ENCODE measurements at regions of chr9 and their contacts with region 1.

Region 1: DNA sequence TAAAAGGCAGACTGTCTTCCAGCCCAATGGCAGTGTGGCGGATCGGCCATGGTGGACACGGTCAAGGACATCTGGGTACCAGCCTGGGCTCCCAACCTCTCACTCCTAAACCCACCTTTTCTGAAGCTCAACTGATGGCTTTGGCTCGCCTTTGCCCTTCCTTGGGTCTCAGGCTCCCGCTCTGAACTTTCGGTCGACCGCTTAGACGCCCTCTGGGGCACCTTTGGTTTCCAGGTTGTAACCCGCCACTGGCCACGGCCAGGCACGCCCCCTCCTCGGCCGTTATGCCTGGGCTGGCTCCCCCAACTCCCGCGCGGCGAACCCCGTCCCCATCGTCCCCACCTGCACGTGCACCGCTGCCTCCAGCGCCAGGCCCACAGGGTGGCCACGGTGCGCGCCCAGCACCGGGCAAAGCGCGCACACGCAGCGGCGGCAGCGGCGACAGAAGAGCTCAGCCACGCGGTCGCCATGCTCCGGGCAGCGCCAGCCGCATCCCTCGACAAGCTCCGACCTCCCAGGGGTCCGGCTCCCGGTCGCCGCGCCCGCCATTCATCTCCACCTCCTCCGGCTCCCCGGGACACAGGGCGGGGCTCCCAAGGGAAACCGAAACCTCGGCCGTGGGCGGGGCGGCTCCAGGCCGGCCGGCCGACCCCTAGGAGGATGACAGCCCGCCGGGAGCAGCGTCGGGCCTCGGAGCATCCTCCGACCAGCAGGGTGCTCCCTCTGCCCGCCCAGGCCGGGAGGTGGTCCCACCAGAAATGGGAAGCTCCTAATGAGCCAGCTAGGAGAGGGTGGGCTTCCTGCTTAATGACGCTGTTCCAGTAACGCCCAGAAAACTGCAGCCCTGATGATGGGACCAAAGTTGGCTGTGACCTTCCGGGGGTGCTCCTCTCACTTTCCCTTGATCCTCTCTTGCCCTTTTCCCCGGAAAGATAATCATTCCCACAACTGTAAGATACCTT is at the start of gene TRIM14:
- DNase-seq: peak; percentile 51
- ATAC-seq: peak; percentile 76
- H3K4me3 Mint-ChIP-seq: peak within 1 kb of the TSS; percentile 91
- H3K27ac Mint-ChIP-seq: peak within 1 kb of the TSS; percentile 85
- H3K4me1 Mint-ChIP-seq: peaks cover 42% of the 10 kb centered on the region
- H3K27me3 Mint-ChIP-seq: no peaks in the 10 kb centered on the region
- CTCF ChIP-seq: no peak
- total RNA-seq, gene TRIM14: 11.7 and 12.8 TPM in 2 replicates

Region 2: DNA sequence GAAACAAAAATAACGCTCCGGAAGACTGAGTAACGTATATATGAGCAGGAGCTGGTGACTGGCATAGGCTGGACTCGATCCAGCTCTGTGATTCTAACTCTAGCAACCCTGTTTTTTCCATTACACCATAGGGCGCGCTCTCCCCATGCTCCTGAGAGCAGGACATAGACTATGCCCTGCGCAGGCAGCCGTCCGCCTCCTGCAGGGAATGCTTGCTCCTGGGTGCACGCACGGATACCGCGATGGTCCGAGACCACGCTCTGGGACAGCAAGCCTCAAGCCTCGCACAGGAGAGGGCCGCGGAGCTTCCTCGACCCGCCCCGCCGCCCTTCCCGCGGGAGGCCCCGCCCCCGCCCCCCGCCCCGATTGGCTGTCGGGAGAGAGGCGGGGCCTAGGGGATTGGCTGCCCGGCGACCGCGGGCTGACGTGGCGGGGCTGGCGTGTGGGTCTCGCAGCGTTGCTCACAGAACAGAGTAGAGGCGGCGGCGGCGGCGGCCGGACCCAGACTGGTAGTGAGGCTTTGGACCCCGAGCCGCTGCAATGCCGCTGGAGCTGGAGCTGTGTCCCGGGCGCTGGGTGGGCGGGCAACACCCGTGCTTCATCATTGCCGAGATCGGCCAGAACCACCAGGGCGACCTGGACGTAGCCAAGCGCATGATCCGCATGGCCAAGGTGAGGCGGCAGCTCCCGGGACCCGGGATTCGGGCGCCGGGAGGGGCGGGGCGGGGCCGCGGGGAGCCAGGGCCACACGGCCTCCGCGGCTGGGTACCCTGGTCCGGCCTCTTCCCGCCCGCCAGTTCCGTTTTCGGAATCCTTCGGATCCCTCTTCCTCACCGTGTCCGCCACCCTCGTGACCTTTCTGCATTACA is 62.4 kb before region 1 on chr9 and contains the start of gene NANS:
- CTCF ChIA-PET with region 1: no interaction called
- POLR2A ChIA-PET with region 1: interaction called, 4 read pairs
- intact Hi-C with region 1: loop called (anchors 2 kb)
- DNase-seq: peak; percentile 87
- ATAC-seq: peak; percentile 97
- H3K4me3 Mint-ChIP-seq: peak within 1 kb of the TSS; percentile 97
- H3K27ac Mint-ChIP-seq: peak within 1 kb of the TSS; percentile 94
- H3K4me1 Mint-ChIP-seq: peaks cover 14% of the 10 kb centered on the region
- H3K27me3 Mint-ChIP-seq: no peaks in the 10 kb centered on the region
- CTCF ChIP-seq: no peak
- total RNA-seq, gene NANS: 21.6 and 21.8 TPM in 2 replicates

Region 3: GRCh38 chr9:98087420-98088354 is 31.2 kb before region 1 on chr9:
- CTCF ChIA-PET with region 1: interaction called, 3 read pairs
- POLR2A ChIA-PET with region 1: no interaction called
- intact Hi-C with region 1: loop called (anchors 5 kb)
- DNase-seq: peak; percentile 74
- ATAC-seq: peak; percentile 84
- H3K4me3 Mint-ChIP-seq: peak overlapping the region; percentile 74
- H3K27ac Mint-ChIP-seq: peak overlapping the region; percentile 50
- H3K4me1 Mint-ChIP-seq: peaks cover 25% of the 10 kb centered on the region
- H3K27me3 Mint-ChIP-seq: no peaks in the 10 kb centered on the region
- CTCF ChIP-seq: no peak

Region 4: GRCh38 chr9:98108531-98109031 is 10.3 kb before region 1 on chr9:
- CTCF ChIA-PET with region 1: interaction called, 5 read pairs
- POLR2A ChIA-PET with region 1: interaction called, 42 read pairs
- intact Hi-C with region 1: loop called (anchors 1 kb)
- DNase-seq: no peak
- ATAC-seq: peak; percentile 80
- H3K4me3 Mint-ChIP-seq: peak overlapping the region; percentile 59
- H3K27ac Mint-ChIP-seq: peak overlapping the region; percentile 98
- H3K4me1 Mint-ChIP-seq: peaks cover 68% of the 10 kb centered on the region
- H3K27me3 Mint-ChIP-seq: no peaks in the 10 kb centered on the region
- CTCF ChIP-seq: no peak

Region 5: DNA sequence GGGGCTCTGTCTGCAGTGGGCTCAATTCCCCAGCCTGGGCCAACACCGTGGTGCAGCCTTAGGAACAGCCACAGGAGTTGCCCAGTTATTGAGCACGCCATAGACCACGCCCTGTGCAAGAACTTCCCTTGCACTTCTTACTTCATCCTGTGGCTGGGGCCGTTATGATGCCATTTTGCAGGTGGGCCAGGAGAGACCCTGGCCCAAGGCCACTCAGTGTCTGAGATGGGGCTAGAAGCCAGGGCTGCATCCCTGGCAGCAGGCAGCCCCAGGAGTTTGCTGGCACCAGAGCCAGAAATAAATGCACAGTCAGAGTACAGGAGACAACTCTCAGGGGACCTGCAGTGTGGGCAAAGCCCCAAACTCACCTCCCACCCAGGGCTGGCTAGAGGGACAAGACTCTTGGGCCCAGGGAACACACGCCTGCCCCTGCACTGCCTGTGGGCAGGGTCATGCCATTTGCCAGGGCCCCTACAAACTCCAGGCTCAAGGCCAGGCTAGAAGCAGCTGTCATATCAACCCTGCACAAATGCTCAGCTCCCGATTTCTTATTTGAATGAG is 66.8 kb after region 1 on chr9:
- CTCF ChIA-PET with region 1: no interaction called
- POLR2A ChIA-PET with region 1: no interaction called
- intact Hi-C with region 1: no loop called
- DNase-seq: no peak
- ATAC-seq: no peak
- H3K4me3 Mint-ChIP-seq: no peak overlapping the region
- H3K27ac Mint-ChIP-seq: no peak overlapping the region
- H3K4me1 Mint-ChIP-seq: no peaks in the 10 kb centered on the region
- H3K27me3 Mint-ChIP-seq: no peaks in the 10 kb centered on the region
- CTCF ChIP-seq: no peak

Region 6: GRCh38 chr9:98206754-98207153 is 87.8 kb after region 1 on chr9:
- CTCF ChIA-PET with region 1: interaction called, 6 read pairs
- POLR2A ChIA-PET with region 1: no interaction called
- intact Hi-C with region 1: loop called (anchors 1 kb)
- DNase-seq: no peak
- ATAC-seq: no peak
- H3K4me3 Mint-ChIP-seq: no peak overlapping the region
- H3K27ac Mint-ChIP-seq: no peak overlapping the region
- H3K4me1 Mint-ChIP-seq: peaks cover 8% of the 10 kb centered on the region
- H3K27me3 Mint-ChIP-seq: no peaks in the 10 kb centered on the region
- CTCF ChIP-seq: no peak

Region 7: DNA sequence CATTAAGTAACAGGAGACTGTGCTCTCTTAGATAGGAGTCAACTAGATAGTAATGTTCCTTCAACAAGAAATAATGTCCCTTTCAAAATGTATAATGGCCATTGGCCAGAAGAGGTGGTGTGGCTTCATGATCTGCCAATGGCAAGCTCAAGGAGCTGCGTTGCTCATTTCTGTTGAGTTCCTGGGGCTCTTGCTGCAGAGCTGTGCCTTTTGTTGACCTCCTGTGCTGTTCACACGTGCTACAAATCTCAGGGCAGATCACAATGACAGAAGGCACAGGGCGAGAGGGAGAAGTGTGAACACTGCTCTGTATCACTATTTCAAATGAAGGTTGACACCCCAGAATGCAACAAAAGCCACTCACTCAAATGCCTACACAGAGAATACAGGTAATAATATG is 152.6 kb after region 1 on chr9:
- CTCF ChIA-PET with region 1: no interaction called
- POLR2A ChIA-PET with region 1: no interaction called
- intact Hi-C with region 1: no loop called
- DNase-seq: no peak
- ATAC-seq: no peak
- H3K4me3 Mint-ChIP-seq: no peak overlapping the region
- H3K27ac Mint-ChIP-seq: no peak overlapping the region
- H3K4me1 Mint-ChIP-seq: no peaks in the 10 kb centered on the region
- H3K27me3 Mint-ChIP-seq: peaks cover 39% of the 10 kb centered on the region
- CTCF ChIP-seq: no peak

Region 8: DNA sequence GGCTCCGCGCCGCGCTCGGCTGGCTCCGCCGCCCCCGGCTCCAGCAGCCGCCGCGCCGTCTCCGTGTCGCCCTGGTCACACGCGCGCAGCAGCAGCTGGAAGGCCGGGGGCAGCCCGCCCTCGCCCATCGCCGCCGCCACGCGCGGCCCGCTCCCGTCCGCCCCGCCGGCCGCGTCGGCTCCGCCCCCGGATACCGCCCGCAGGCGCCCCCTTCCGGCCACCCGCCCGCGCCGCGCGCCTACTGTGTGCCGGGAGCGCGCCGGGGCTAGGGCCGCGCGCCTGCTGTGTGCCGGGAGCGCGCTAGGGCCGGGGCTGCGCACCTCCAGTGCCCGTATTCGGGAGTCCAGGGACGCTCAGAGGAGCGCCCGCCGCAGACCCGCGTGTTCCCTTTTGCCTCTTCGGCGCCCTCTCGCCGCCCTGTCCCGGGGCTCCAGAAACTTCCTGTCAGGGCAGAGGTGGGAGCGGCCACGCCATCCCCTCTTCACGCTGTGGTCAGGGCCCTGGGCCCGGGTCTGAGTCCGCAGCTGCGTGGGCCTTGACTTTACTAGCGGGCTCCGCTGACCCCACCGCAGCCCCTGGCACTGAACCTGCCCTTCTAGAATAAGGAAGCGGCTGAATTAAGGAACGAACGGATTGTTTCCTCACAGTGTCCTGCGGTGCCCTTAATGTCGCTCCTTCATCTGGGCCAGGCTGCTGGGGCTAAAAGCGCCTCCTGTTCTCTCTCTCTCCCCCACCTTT is 677.6 kb after region 1 on chr9 and contains the start of gene ANKS6:
- CTCF ChIA-PET with region 1: no interaction called
- POLR2A ChIA-PET with region 1: no interaction called
- intact Hi-C with region 1: loop called (anchors 5 kb)
- DNase-seq: peak; percentile 91
- ATAC-seq: peak; percentile 94
- H3K4me3 Mint-ChIP-seq: peak within 1 kb of the TSS; percentile 87
- H3K27ac Mint-ChIP-seq: peak within 1 kb of the TSS; percentile 47
- H3K4me1 Mint-ChIP-seq: peaks cover 16% of the 10 kb centered on the region
- H3K27me3 Mint-ChIP-seq: peaks cover 1% of the 10 kb centered on the region
- CTCF ChIP-seq: no peak
- total RNA-seq, gene ANKS6: 12.1 and 14.8 TPM in 2 replicates

Measured in activated B cell treated with CpG ODN at 0.5 μM for 24 hours (primary cell).